ENCODE measurements at regions of chr6 and their contacts with region 1.

Region 1: GRCh38 chr6:159463119-159463829 is 229.8 kb downstream of the SOD2 start:
- DNase-seq: peak; percentile 10
- ATAC-seq: no peak
- H3K4me3 ChIP-seq: no peak overlapping the region
- H3K27ac ChIP-seq: no peak overlapping the region
- H3K4me1 ChIP-seq: no peaks in the 10 kb centered on the region
- H3K27me3 ChIP-seq: no peaks in the 10 kb centered on the region
- CTCF ChIP-seq: peak; percentile 35
- POLR2A ChIP-seq: no peak
- RAD21 ChIP-seq: peak; percentile 27; the same call in 1 of the 2 replicates

Region 2: GRCh38 chr6:159490298-159490937 is 27.1 kb after region 1 on chr6:
- CTCF ChIA-PET with region 1: no interaction called
- POLR2A ChIA-PET with region 1: no interaction called
- dilution Hi-C with region 1: no loop called
- in situ Hi-C with region 1: no loop called
- intact Hi-C with region 1: loop called (anchors 1 kb)
- DNase-seq: no peak
- ATAC-seq: no peak
- H3K4me3 ChIP-seq: no peak overlapping the region
- H3K27ac ChIP-seq: no peak overlapping the region
- H3K4me1 ChIP-seq: no peaks in the 10 kb centered on the region
- H3K27me3 ChIP-seq: no peaks in the 10 kb centered on the region
- CTCF ChIP-seq: no peak
- POLR2A ChIP-seq: no peak
- RAD21 ChIP-seq: no peak